H1 (cell line): ENCODE measurements at regions of chr7 and their contacts with region 1.

Region 1: DNA sequence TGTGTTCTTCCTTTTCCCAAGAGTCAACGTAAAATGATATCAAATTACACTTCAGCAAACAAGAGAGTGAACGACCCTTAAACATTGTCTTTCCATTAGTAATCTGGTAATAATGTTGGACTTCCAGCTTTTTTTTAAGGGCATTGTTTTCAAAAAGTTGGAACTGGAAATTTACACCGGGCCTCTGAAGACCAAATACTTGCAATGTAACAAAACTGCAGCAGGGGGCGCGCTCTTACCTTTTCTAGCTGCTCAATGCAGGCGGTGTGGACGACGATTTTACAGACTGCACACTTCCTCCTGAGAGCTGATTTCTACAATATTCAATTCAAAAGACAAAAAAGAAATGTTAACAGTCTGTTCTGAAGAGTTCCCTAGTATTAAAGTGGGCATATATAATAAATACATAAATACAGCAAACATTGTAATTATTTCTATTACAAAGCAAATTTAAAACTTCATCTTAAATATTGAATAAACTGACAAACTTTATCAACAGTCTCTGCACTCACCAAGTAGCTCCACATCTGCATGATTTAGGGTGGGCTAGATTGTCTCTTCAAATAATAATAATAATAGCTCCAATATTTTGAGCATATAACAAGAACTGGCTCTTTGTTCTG is 190.4 kb downstream of the DGKI start:
- DNase-seq: peak; percentile 10 to 89
- H3K4me3 ChIP-seq: no peak overlapping the region
- H3K27ac ChIP-seq: no peak overlapping the region
- H3K4me1 ChIP-seq: peaks cover 0 to 14% (median 12%) of the 10 kb centered on the region in 4 experiments; a peak in 5 of 7 replicates
- H3K27me3 ChIP-seq: no peaks in the 10 kb centered on the region
- CTCF ChIP-seq: peak; percentile 67 to 78 (median 73)
- EP300 ChIP-seq: no peak
- POLR2A ChIP-seq: no peak
- RAD21 ChIP-seq: peak; percentile 88 to 93

Region 2: GRCh38 chr7:137572056-137572784 is 84.1 kb before region 1 on chr7:
- CTCF ChIA-PET with region 1: no interaction called
- POLR2A ChIA-PET with region 1: no interaction called
- DNase-seq: no peak
- H3K4me3 ChIP-seq: no peak overlapping the region
- H3K27ac ChIP-seq: no peak overlapping the region
- H3K4me1 ChIP-seq: no peaks in the 10 kb centered on the region
- H3K27me3 ChIP-seq: no peaks in the 10 kb centered on the region
- CTCF ChIP-seq: no peak
- EP300 ChIP-seq: no peak
- POLR2A ChIP-seq: no peak
- RAD21 ChIP-seq: no peak

Region 3: DNA sequence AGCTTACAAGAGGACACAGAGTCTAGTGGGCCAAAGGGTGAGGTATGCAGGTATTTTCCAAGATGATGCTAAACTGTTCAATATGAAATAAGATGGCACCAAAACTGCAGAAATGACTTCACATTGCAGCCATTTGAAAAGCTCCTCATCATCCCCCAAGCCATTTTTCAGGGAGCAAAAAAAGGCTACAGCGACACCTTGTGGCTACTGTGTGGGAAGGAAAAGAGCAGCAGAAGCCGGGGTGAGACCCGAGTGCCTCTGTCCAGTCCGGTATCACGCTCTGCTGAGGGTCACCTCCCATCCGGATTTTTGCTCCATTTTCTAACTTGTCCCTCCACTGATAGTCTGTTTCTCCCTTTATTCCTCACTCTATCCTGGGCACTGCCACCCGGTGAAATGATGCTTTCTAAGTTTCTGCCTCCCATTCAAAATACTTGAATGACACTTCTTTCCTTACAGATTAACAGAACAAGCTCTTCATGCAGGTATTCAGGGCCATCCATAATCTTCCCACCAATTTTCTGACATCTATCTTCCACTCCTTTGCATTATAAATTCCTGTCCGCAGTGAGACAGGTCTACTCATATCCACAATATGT is 29.8 kb before region 1 on chr7:
- CTCF ChIA-PET with region 1: interaction called, 45 read pairs
- POLR2A ChIA-PET with region 1: no interaction called
- DNase-seq: peak in 1 of 2 experiments; percentile 85
- H3K4me3 ChIP-seq: no peak overlapping the region
- H3K27ac ChIP-seq: no peak overlapping the region
- H3K4me1 ChIP-seq: no peaks in the 10 kb centered on the region
- H3K27me3 ChIP-seq: no peaks in the 10 kb centered on the region
- CTCF ChIP-seq: peak; percentile 71 to 92 (median 89)
- EP300 ChIP-seq: no peak
- POLR2A ChIP-seq: no peak
- RAD21 ChIP-seq: peak; percentile 80 to 88

Region 4: DNA sequence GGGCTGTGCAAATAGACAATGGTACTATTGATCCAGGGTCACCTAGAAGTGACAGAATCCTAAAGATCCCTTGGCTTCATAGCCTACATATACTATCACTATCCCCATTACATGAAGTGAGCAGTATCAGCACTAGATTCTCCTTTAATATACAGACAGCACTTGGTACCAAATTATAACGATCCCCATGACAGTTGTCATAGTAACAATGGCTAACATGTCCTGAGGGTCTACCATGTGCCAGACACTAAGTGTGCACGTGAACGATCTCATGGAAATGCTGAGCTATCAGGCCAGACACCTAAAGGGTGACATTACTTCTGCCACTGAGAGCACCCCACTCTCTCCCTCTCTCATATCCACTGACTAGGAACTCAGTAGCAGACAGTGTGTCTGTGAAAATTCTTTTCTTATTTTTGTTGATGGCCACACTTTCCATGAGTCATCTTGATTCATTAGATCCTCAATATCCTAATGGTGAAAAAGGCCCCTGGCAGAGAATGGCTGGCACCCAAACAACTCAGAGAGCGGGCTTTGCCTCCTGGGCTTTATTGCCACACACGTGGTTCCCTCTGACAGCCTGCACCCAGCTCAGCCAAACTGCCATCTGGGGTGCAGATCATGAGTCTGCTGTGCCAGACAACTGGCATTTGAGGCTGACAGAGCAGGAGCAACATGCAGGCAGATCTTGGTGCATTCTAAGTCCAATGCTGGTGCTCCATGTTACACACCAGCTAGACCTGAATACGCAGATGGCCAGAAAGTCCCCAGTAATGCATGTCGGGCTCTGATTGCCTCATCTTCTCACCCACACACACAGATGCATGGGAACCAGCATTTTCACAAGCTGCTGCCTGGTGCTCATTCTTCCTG is 14.1 kb after region 1 on chr7:
- CTCF ChIA-PET with region 1: interaction called, 29 read pairs
- POLR2A ChIA-PET with region 1: interaction called, 5 read pairs
- DNase-seq: no peak
- H3K4me3 ChIP-seq: no peak overlapping the region
- H3K27ac ChIP-seq: no peak overlapping the region
- H3K4me1 ChIP-seq: peaks cover 0 to 16% (median 9%) of the 10 kb centered on the region in 4 experiments; a peak in 5 of 7 replicates
- H3K27me3 ChIP-seq: no peaks in the 10 kb centered on the region
- CTCF ChIP-seq: no peak
- EP300 ChIP-seq: no peak
- POLR2A ChIP-seq: no peak
- RAD21 ChIP-seq: no peak

Region 5: DNA sequence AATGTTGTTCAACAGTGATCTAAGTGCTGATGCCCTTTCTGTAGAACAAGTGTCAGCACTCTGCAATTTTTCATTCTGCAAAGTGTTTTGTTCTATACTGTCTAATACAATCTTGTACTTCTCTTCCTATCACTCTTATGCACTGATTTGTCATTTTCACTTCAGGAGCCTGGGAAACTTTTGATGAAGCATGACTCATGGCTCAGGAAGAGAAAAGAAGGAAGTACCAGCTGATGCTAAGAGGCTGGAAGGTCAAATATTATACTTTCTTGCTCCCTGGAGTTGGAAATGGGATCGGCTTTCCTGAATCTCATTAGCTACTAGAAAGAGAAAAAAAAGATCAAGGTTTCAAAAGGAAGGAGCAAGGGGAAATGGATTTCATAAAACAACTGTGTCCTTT is 144.7 kb after region 1 on chr7:
- CTCF ChIA-PET with region 1: interaction called, 34 read pairs
- POLR2A ChIA-PET with region 1: no interaction called
- DNase-seq: no peak
- H3K4me3 ChIP-seq: no peak overlapping the region
- H3K27ac ChIP-seq: no peak overlapping the region
- H3K4me1 ChIP-seq: peaks cover 0 to 5% (median 2%) of the 10 kb centered on the region in 4 experiments; a peak in 4 of 7 replicates
- H3K27me3 ChIP-seq: no peaks in the 10 kb centered on the region; a peak in 1 of 7 replicates
- CTCF ChIP-seq: no peak
- EP300 ChIP-seq: no peak
- POLR2A ChIP-seq: no peak
- RAD21 ChIP-seq: no peak

Region 6: DNA sequence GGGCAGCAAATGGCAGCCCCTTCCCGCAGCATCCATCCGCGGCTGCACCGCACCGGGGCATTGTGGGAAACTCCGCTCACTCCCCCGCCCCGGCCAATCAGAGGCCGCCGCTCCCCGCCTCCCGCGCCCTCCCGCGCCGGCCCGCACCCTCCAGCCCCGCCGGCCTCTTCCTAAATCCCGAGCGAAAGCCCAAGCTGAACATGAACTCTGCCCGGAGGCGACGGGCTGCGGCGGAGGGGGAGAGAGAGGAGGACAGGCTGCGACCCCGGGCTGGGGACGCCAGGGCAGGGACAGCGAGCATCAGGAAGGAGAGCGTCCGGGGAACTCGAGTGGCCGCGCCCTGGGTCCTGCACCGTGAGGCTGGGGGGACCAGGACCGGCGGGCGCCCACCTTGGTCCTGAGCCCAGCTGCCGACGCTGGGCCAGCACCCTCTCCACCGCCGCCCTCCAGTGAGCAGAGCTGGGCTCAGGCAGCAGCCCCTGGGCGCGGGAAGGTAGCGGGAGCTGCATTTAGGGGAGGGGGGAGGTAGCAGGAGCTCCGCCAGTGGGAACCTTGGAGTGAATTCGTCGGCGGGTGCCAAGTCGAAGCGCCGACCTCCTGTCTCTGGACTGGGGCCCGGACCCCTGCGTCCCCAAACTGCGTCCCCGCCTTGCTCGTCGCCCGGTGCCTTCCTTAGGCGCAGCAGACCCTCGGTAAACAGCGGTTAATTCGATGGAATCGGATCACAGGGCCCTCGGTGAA is 190.7 kb after region 1 on chr7 and contains the start of gene DGKI:
- CTCF ChIA-PET with region 1: interaction called, 31 read pairs
- POLR2A ChIA-PET with region 1: no interaction called
- DNase-seq: peak in 1 of 2 experiments; percentile 81
- H3K4me3 ChIP-seq: peak within 1 kb of the TSS; percentile 32 to 63 (median 46)
- H3K27ac ChIP-seq: no peak within 1 kb of the TSS
- H3K4me1 ChIP-seq: peaks cover 2 to 10% (median 8%) of the 10 kb centered on the region in 4 experiments; a peak in 6 of 7 replicates
- H3K27me3 ChIP-seq: peaks cover 24 to 46% (median 37%) of the 10 kb centered on the region in 4 experiments
- CTCF ChIP-seq: no peak
- EP300 ChIP-seq: no peak
- POLR2A ChIP-seq: no peak
- RAD21 ChIP-seq: no peak
- total RNA-seq, gene DGKI: 0.71 and 0.84 TPM in 2 replicates

Region 7: DNA sequence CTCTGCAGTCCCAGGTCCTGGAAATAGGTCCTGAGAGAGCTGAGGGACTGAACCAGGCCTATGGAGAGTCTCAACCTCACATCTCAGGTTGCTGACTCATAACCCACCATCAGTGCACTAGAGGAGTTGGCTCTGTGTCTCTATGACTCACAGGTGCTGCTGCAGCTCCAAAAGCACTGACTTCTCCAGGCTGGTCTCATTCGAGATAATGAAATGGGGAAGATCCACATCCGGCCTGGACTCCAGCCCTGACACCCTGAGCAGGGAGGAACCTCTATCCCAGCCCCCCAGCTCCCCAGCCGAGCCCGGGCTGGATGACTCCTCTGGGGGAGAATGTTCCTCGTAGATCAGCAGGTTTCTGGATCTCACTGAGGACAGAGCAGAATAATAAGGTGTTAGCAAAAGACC is 225.9 kb after region 1 on chr7:
- CTCF ChIA-PET with region 1: interaction called, 26 read pairs
- POLR2A ChIA-PET with region 1: no interaction called
- DNase-seq: no peak
- H3K4me3 ChIP-seq: no peak overlapping the region
- H3K27ac ChIP-seq: no peak overlapping the region; the same call in 1 of the 2 replicates
- H3K4me1 ChIP-seq: peaks cover 9 to 39% (median 26%) of the 10 kb centered on the region in 4 experiments; a peak in 5 of 7 replicates
- H3K27me3 ChIP-seq: no peaks in the 10 kb centered on the region
- CTCF ChIP-seq: no peak
- EP300 ChIP-seq: no peak
- POLR2A ChIP-seq: no peak
- RAD21 ChIP-seq: no peak

Region 8: GRCh38 chr7:137898839-137899721 is 242.7 kb after region 1 on chr7:
- CTCF ChIA-PET with region 1: interaction called, 37 read pairs
- POLR2A ChIA-PET with region 1: no interaction called
- DNase-seq: peak; percentile 73 to 95
- H3K4me3 ChIP-seq: peak overlapping the region in 2 of 4 experiments; percentile 2 to 46; a peak in 3 of 8 replicates
- H3K27ac ChIP-seq: no peak overlapping the region; the same call in 1 of the 2 replicates
- H3K4me1 ChIP-seq: peaks cover 0 to 2% (median 0%) of the 10 kb centered on the region in 4 experiments; a peak in 3 of 7 replicates
- H3K27me3 ChIP-seq: no peaks in the 10 kb centered on the region
- CTCF ChIP-seq: peak; percentile 91 to 98 (median 96)
- EP300 ChIP-seq: no peak
- POLR2A ChIP-seq: no peak
- RAD21 ChIP-seq: peak; percentile 96